ENCODE measurements at regions of chr16 and their contacts with region 1.

Region 1: DNA sequence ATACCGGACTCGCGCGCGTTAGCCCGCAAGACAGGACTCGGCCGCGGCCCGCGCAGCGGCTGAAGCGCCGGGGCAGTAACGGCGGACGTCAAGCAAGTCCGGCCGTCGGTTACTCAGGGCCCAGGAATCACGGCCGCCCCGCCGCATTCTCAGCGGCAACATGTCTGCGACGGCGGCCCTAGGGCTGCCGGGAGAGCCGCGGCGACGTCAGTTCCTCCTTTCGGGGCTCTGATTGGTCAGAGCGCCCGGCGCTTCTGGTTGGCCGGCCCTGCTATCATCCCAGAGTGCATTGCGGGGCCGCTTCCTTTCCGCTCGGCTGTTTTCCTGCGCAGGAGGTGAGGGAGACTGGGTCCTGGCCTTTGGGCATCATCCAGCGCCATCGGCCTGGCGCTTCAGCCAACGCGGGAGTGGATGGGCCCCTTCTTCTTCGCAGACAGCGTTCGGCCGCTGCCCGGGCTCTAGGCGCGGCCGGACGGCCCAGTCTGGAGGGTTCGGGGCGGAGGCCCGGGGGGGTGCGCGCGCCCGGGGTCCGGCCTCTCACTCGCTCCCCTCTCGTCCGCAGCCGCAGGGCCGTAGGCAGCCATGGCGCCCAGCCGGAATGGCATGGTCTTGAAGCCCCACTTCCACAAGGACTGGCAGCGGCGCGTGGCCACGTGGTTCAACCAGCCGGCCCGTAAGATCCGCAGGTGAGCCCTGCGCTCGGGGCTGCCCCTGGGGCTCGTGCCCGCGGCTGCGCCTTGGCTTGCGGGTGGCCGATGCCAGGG is at the start of gene RPL13:
- DNase-seq: peak; percentile 95
- ATAC-seq: peak; percentile 94
- H3K4me3 ChIP-seq: peak within 1 kb of the TSS; percentile 54 to 99 (median 92)
- H3K4me3 Mint-ChIP-seq: peak within 1 kb of the TSS; percentile 92
- H3K27ac ChIP-seq: peak within 1 kb of the TSS; percentile 82 to 91
- H3K27ac Mint-ChIP-seq: peak within 1 kb of the TSS; percentile 95
- H3K4me1 ChIP-seq: peaks cover 36 to 41% of the 10 kb centered on the region in 2 donors
- H3K4me1 Mint-ChIP-seq: peaks cover 43% of the 10 kb centered on the region
- H3K27me3 ChIP-seq: no peaks in the 10 kb centered on the region
- H3K27me3 Mint-ChIP-seq: no peaks in the 10 kb centered on the region
- CTCF ChIP-seq: no peak
- total RNA-seq, gene RPL13: 3,172 and 3,184 TPM in 2 replicates

Region 2: GRCh38 chr16:88811769-88812512 is 748.6 kb before region 1 on chr16 and contains the start of gene APRT:
- CTCF ChIA-PET with region 1: no interaction called
- POLR2A ChIA-PET with region 1: no interaction called
- intact Hi-C with region 1: loop called (anchors 1 kb)
- DNase-seq: peak; percentile 97
- ATAC-seq: peak; percentile 87
- H3K4me3 ChIP-seq: peak within 1 kb of the TSS; percentile 45 to 90 (median 77)
- H3K4me3 Mint-ChIP-seq: peak within 1 kb of the TSS; percentile 98
- H3K27ac ChIP-seq: peak within 1 kb of the TSS; percentile 61 to 65
- H3K27ac Mint-ChIP-seq: peak within 1 kb of the TSS; percentile 99
- H3K4me1 ChIP-seq: peaks cover 11 to 27% of the 10 kb centered on the region in 2 donors
- H3K4me1 Mint-ChIP-seq: peaks cover 19% of the 10 kb centered on the region
- H3K27me3 ChIP-seq: no peaks in the 10 kb centered on the region
- H3K27me3 Mint-ChIP-seq: no peaks in the 10 kb centered on the region
- CTCF ChIP-seq: no peak
- total RNA-seq, gene APRT: 111 and 124 TPM in 2 replicates

Region 3: GRCh38 chr16:89241187-89242007 is 319.2 kb before region 1 on chr16:
- CTCF ChIA-PET with region 1: interaction called, 3 read pairs
- POLR2A ChIA-PET with region 1: interaction called, 3 read pairs
- intact Hi-C with region 1: loop called (anchors 1 kb)
- DNase-seq: peak; percentile 94
- ATAC-seq: peak; percentile 77
- H3K4me3 ChIP-seq: peak overlapping the region; percentile 74 to 95 (median 82)
- H3K4me3 Mint-ChIP-seq: peak overlapping the region; percentile 99
- H3K27ac ChIP-seq: peak overlapping the region; percentile 93 to 97
- H3K27ac Mint-ChIP-seq: peak overlapping the region; percentile 100
- H3K4me1 ChIP-seq: peaks cover 0 to 11% of the 10 kb centered on the region in 2 donors
- H3K4me1 Mint-ChIP-seq: peaks cover 14% of the 10 kb centered on the region
- H3K27me3 ChIP-seq: no peaks in the 10 kb centered on the region
- H3K27me3 Mint-ChIP-seq: no peaks in the 10 kb centered on the region
- CTCF ChIP-seq: no peak

Region 4: DNA sequence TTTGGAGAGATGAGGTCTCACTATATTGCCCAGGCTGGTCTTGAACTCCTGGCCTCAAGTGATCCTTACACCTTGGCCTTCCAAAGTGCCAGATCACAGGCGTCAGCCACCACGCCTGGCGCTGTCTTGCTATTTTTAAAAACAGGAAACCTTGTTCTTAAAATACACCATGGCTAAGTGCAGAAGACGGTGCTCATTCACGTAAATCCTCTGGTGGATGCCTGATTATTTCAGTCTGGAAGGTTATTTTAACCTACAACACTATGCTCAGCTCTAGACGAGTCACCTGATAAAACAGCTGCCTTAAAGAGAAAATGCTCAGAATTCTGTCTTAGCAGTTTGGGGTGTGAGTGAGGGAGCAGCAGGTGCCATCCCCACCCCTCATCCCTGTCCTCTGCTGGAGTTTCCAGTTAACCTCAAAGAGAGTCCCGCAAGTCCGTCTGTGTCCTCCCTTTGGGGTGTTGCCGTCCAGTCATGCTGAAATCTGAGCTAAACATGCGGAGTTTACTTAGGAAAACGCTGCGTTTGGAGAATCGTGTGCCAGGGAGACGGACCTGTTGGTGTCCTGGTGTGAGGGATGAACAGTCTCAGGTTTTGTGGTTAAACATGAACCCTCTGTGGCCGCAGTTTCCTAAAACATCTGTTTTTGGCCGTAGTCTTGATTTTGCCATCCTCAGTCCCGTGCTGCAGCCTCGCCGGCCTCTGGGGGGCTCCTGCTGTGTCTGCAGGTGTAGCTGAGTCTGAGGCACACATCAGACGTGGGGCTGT is 35.2 kb before region 1 on chr16:
- CTCF ChIA-PET with region 1: interaction called, 15 read pairs
- POLR2A ChIA-PET with region 1: no interaction called
- intact Hi-C with region 1: no loop called
- DNase-seq: peak; percentile 47
- ATAC-seq: peak; percentile 41
- H3K4me3 ChIP-seq: no peak overlapping the region
- H3K4me3 Mint-ChIP-seq: no peak overlapping the region
- H3K27ac ChIP-seq: peak overlapping the region in 1 of 2 donors; percentile 35
- H3K27ac Mint-ChIP-seq: no peak overlapping the region
- H3K4me1 ChIP-seq: peaks cover 16 to 18% of the 10 kb centered on the region in 2 donors
- H3K4me1 Mint-ChIP-seq: peaks cover 19% of the 10 kb centered on the region
- H3K27me3 ChIP-seq: no peaks in the 10 kb centered on the region
- H3K27me3 Mint-ChIP-seq: no peaks in the 10 kb centered on the region
- CTCF ChIP-seq: no peak

Region 5: DNA sequence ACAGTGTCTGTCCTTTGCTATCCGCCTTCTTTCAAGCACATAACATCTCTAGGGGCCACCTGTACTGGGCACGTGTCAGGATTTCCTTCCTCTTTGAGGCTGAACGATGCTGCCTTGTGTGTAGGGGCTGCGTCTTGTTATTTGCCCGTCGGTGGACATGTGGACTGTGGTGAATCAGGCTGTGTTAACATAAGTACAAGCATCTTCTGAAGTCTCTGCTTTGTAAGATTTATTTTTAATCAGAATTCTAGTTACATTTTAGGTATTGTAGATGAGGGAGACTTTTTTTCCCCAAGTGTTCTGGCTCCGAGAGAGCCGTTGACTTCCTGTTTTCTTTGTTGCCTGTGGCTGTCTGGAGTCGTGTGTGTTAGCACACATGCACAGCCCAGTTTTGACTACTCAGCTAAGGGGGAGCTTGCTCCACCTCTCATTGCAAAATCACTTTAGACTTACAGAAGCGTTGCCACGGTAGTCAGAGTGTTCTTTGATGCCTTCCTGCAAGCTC is 26.3 kb before region 1 on chr16:
- CTCF ChIA-PET with region 1: interaction called, 9 read pairs
- POLR2A ChIA-PET with region 1: no interaction called
- intact Hi-C with region 1: loop called (anchors 1 kb)
- DNase-seq: peak; percentile 82
- ATAC-seq: peak; percentile 91
- H3K4me3 ChIP-seq: peak overlapping the region in 4 of 5 experiments; percentile 13 to 39 (median 22)
- H3K4me3 Mint-ChIP-seq: peak overlapping the region; percentile 80
- H3K27ac ChIP-seq: peak overlapping the region; percentile 43 to 81
- H3K27ac Mint-ChIP-seq: peak overlapping the region; percentile 88
- H3K4me1 ChIP-seq: peaks cover 23 to 24% of the 10 kb centered on the region in 2 donors
- H3K4me1 Mint-ChIP-seq: peaks cover 22% of the 10 kb centered on the region
- H3K27me3 ChIP-seq: no peaks in the 10 kb centered on the region
- H3K27me3 Mint-ChIP-seq: no peaks in the 10 kb centered on the region
- CTCF ChIP-seq: no peak

Region 6: DNA sequence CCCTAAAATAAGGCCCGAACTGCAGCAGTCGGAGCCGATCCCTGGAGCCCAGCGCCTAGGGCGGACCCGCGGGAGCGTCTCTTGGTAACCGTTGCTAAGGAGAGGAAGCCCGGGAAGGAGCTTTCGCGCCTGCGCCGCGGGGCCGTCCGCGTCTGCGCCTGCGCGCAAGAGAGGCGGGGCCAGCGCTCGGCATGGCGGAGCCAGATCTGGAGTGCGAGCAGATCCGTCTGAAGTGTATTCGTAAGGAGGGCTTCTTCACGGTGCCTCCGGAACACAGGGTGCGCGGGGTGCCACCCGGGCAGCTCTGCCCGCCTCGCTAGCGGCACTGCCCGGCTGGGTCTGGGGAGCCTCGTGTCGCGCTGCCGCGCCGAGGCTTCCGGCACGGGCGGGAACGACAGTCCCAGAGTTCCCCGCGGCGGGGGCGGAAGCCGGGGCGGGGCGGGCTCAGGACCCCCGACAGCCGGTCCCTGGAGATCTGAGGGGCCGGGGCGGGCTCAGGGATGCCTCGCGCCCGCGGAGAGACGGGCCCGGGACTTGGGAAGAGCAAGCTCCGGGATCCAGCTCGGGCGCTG is 126.0 kb after region 1 on chr16 and contains the start of gene CDK10:
- CTCF ChIA-PET with region 1: no interaction called
- POLR2A ChIA-PET with region 1: no interaction called
- intact Hi-C with region 1: loop called (anchors 5 kb)
- DNase-seq: peak; percentile 94
- ATAC-seq: peak; percentile 90
- H3K4me3 ChIP-seq: peak within 1 kb of the TSS; percentile 52 to 96 (median 78)
- H3K4me3 Mint-ChIP-seq: peak within 1 kb of the TSS; percentile 96
- H3K27ac ChIP-seq: peak within 1 kb of the TSS; percentile 54 to 83
- H3K27ac Mint-ChIP-seq: peak within 1 kb of the TSS; percentile 97
- H3K4me1 ChIP-seq: peaks cover 7 to 15% of the 10 kb centered on the region in 2 donors
- H3K4me1 Mint-ChIP-seq: peaks cover 18% of the 10 kb centered on the region
- H3K27me3 ChIP-seq: no peaks in the 10 kb centered on the region
- H3K27me3 Mint-ChIP-seq: no peaks in the 10 kb centered on the region
- CTCF ChIP-seq: no peak
- total RNA-seq, gene CDK10: 114 and 119 TPM in 2 replicates

Region 7: DNA sequence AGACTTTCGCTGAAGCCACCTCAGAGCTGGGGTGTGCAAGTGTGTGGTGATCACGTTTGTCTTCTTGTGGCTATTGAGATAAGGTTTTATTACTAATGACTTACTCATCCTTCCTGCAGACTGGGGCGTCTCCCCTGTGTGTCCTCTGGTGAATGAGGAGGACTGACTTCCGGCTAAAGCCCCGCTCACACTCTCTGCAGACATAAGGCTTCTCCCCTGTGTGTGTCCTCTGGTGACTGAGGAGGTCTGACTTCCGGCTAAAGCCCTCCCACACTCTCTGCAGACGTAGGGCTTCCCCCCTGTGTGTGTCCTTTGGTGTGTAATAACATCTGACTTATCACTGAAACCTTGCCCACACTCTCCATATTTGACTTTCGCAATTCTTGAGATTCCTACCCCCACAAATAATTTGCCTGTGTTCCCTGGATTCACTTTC is 497.2 kb after region 1 on chr16:
- CTCF ChIA-PET with region 1: no interaction called
- POLR2A ChIA-PET with region 1: no interaction called
- intact Hi-C with region 1: no loop called
- DNase-seq: no peak
- ATAC-seq: no peak
- H3K4me3 ChIP-seq: no peak overlapping the region
- H3K4me3 Mint-ChIP-seq: no peak overlapping the region
- H3K27ac ChIP-seq: no peak overlapping the region
- H3K27ac Mint-ChIP-seq: no peak overlapping the region
- H3K4me1 ChIP-seq: no peaks in the 10 kb centered on the region
- H3K4me1 Mint-ChIP-seq: no peaks in the 10 kb centered on the region
- H3K27me3 ChIP-seq: no peaks in the 10 kb centered on the region
- H3K27me3 Mint-ChIP-seq: peaks cover 30% of the 10 kb centered on the region
- CTCF ChIP-seq: no peak

Measured in B cell (primary cell).